ENCODE measurements at regions of chr3 and their contacts with region 1.

Region 1: DNA sequence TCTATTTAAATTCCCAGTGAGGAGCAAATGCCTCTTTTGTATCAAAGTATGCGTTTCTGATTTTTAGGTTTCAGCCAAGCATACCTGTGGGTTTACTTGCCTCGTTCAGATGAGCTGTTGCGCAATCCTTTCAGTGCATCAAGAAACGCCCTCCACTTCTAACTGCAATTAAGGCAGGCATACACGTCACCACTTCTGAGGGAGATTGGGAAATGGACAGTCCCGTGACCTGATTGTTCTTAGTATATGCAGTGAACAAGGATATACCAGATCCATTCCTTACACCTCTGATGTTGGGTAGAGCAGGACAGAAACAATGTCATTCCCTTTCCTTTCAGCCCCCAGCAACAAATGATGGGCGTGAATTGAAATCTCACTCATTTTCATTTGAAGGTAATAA is 219.0 kb downstream of the ITPR1 start:
- DNase-seq: no peak
- ATAC-seq: no peak
- H3K4me3 Mint-ChIP-seq: no peak overlapping the region
- H3K27ac Mint-ChIP-seq: no peak overlapping the region
- H3K4me1 Mint-ChIP-seq: peaks cover 33% of the 10 kb centered on the region
- H3K27me3 Mint-ChIP-seq: no peaks in the 10 kb centered on the region

Region 2: GRCh38 chr3:4644951-4645350 is 67.2 kb before region 1 on chr3:
- CTCF ChIA-PET with region 1: no interaction called
- DNase-seq: no peak
- ATAC-seq: no peak
- H3K4me3 Mint-ChIP-seq: no peak overlapping the region
- H3K27ac Mint-ChIP-seq: no peak overlapping the region
- H3K4me1 Mint-ChIP-seq: peaks cover 9% of the 10 kb centered on the region
- H3K27me3 Mint-ChIP-seq: no peaks in the 10 kb centered on the region

Region 3: GRCh38 chr3:4726549-4726948 is 14.4 kb after region 1 on chr3:
- CTCF ChIA-PET with region 1: interaction called, 21 read pairs
- DNase-seq: no peak
- ATAC-seq: no peak
- H3K4me3 Mint-ChIP-seq: no peak overlapping the region
- H3K27ac Mint-ChIP-seq: no peak overlapping the region
- H3K4me1 Mint-ChIP-seq: peaks cover 44% of the 10 kb centered on the region
- H3K27me3 Mint-ChIP-seq: no peaks in the 10 kb centered on the region

Region 4: GRCh38 chr3:4834403-4834866 is 122.3 kb after region 1 on chr3:
- CTCF ChIA-PET with region 1: interaction called, 10 read pairs
- DNase-seq: peak; percentile 95
- ATAC-seq: peak; percentile 63
- H3K4me3 Mint-ChIP-seq: peak overlapping the region; percentile 71
- H3K27ac Mint-ChIP-seq: peak overlapping the region; percentile 97
- H3K4me1 Mint-ChIP-seq: peaks cover 89% of the 10 kb centered on the region
- H3K27me3 Mint-ChIP-seq: no peaks in the 10 kb centered on the region

Region 5: GRCh38 chr3:4888913-4889846 is 177.0 kb after region 1 on chr3:
- CTCF ChIA-PET with region 1: interaction called, 22 read pairs
- DNase-seq: peak; percentile 72
- ATAC-seq: peak; percentile 93
- H3K4me3 Mint-ChIP-seq: peak overlapping the region; percentile 15
- H3K27ac Mint-ChIP-seq: peak overlapping the region; percentile 85
- H3K4me1 Mint-ChIP-seq: peaks cover 40% of the 10 kb centered on the region
- H3K27me3 Mint-ChIP-seq: no peaks in the 10 kb centered on the region

Region 6: GRCh38 chr3:4986782-4987537 is 274.8 kb after region 1 on chr3:
- CTCF ChIA-PET with region 1: interaction called, 76 read pairs
- DNase-seq: peak; percentile 92
- ATAC-seq: peak; percentile 75
- H3K4me3 Mint-ChIP-seq: peak overlapping the region; percentile 93
- H3K27ac Mint-ChIP-seq: peak overlapping the region; percentile 92
- H3K4me1 Mint-ChIP-seq: peaks cover 69% of the 10 kb centered on the region
- H3K27me3 Mint-ChIP-seq: no peaks in the 10 kb centered on the region

Region 7: DNA sequence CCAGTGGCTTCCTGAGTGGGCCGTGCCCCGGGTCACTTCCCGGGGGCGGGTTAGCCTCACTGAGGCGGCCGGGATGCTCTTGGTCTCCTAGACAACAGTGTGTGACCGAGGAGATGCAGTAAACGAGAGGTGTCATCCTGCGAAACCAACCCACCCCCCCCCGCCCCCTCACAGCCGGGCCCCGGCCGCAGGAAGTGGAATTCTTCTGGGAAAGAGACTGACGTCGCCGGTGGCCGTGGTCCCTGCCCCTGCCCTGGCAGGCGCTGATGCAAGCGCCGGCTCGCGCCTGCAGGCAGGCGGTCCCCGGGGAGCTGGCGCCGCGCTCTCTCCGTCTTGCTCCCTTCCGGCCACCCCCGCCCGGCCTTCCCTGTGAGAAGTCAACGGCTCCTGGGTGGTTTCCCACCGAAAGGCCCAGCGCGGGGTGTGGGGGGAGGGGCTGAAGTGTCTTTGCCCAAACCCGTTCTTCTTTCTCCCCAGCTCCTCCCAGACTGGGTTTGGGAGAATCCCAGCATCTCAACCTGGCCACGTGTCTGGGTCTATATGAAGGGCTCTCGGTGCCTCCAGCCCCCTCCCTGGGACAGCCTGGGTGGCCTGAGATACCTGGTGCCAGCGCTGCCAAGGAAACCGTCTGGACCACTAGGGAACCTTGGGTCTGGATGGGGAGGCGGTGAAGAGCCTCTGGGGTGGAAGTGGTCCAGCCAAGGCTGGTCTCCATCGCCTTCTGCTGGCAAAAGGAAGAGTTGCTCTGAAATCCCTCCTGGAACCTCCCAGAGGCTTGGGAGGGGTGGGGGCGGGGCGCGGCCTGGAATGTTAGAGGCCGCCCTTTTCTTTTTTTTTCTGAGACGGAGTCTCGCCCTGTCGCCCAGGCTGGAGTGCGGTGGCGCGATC is 314.4 kb after region 1 on chr3:
- CTCF ChIA-PET with region 1: interaction called, 32 read pairs
- DNase-seq: peak; percentile 85
- ATAC-seq: peak; percentile 70
- H3K4me3 Mint-ChIP-seq: peak overlapping the region; percentile 74
- H3K27ac Mint-ChIP-seq: peak overlapping the region; percentile 87
- H3K4me1 Mint-ChIP-seq: peaks cover 64% of the 10 kb centered on the region
- H3K27me3 Mint-ChIP-seq: no peaks in the 10 kb centered on the region

Region 8: GRCh38 chr3:5057857-5058324 is 345.7 kb after region 1 on chr3:
- CTCF ChIA-PET with region 1: interaction called, 190 read pairs
- DNase-seq: peak; percentile 91
- ATAC-seq: peak; percentile 94
- H3K4me3 Mint-ChIP-seq: no peak overlapping the region
- H3K27ac Mint-ChIP-seq: peak overlapping the region; percentile 20
- H3K4me1 Mint-ChIP-seq: peaks cover 73% of the 10 kb centered on the region
- H3K27me3 Mint-ChIP-seq: peaks cover 9% of the 10 kb centered on the region